Activated CD4-positive, alpha-beta memory T cell treated with anti-CD3 and anti-CD28 coated beads for 36 hours (primary cell): ENCODE measurements at regions of chr10 and their contacts with region 1.

Region 1: DNA sequence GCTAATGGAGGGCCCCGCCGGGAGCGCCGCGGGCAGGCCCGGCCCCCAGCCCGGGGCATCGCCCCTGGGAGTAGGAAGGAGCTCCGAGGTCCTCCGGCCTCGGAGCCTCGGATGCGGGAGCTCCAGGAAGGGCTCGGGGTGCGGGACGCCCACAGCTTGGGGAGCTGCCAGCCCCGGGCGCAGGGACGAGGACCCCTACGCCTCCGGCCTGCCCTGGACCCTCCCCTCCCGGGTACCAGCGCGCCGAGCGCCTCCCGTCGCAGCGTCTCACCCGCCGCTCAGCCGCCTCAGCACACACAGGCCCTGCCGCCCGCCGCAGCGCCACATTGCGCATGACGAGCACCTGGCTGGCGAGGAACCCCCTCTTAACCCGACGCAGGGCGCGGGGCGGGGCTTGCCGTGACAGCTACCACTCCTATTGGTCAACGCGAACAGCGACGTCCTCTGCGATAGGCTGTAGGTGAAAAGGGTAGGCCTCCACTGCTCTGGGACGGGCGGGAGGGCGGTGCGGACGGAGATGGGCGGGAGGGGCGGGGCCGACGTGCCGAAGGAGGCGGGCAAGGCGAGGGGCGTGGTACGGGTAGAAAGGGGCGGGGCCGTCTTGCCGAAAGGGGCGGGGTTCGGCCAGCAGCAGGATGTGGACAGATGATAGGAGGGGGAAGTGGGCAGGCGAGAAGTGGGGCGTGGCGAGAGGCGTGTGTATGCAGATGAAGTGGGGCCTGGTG is at the start of gene PITRM1:
- DNase-seq: peak; percentile 99
- H3K4me3 Mint-ChIP-seq: peak within 1 kb of the TSS; percentile 86
- H3K27ac Mint-ChIP-seq: peak within 1 kb of the TSS; percentile 86
- H3K4me1 Mint-ChIP-seq: peaks cover 27% of the 10 kb centered on the region
- H3K27me3 Mint-ChIP-seq: no peaks in the 10 kb centered on the region
- total RNA-seq, gene PITRM1: 103 to 109 TPM

Region 2: DNA sequence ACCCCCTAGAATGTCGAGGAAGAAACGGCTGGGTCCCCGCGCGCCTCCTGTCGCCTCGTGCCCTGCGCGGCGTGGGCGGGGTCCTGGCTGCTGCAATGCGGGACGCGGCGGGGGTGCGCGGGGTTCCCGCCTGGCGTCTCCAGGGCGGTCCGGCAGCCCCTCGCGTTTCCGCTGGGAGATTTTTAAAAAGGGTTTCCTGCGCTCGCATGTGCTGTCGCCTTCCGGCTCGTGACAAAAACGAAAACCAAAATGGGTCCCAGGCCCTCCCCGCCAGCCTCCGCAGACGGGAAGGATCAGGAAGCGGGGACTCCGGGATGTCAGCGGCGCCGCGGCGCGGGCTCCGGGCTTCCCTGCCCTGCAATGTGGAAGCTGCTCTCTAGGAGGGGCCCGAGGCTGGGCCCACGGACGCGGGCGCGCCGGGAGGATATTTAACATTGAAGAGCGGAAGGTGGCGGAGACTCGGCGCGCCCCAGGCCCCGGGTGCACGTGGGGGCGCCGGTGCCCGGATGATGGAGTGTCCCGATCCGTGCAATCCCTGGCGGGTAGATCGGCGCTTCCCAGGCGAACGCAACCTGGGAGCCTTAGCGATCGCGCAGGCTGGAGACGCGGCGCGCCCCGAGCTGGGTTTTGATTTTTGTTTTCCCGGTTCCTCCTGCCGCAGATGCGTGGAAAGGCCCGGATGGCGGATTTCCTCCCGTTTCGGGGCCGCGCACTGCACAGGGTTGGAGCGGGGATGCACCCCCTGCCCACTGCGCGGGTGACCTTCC is 104.2 kb before region 1 on chr10:
- CTCF ChIA-PET with region 1: no interaction called
- POLR2A ChIA-PET with region 1: interaction called, 3 read pairs
- intact Hi-C with region 1: loop called (anchors 2 kb)
- DNase-seq: peak; percentile 79
- H3K4me3 Mint-ChIP-seq: peak overlapping the region; percentile 88
- H3K27ac Mint-ChIP-seq: peak overlapping the region; percentile 88
- H3K4me1 Mint-ChIP-seq: peaks cover 41% of the 10 kb centered on the region
- H3K27me3 Mint-ChIP-seq: peaks cover 6% of the 10 kb centered on the region

Region 3: GRCh38 chr10:3376631-3377030 is 204.0 kb after region 1 on chr10:
- CTCF ChIA-PET with region 1: no interaction called
- POLR2A ChIA-PET with region 1: no interaction called
- intact Hi-C with region 1: no loop called
- DNase-seq: no peak
- H3K4me3 Mint-ChIP-seq: no peak overlapping the region
- H3K27ac Mint-ChIP-seq: no peak overlapping the region
- H3K4me1 Mint-ChIP-seq: no peaks in the 10 kb centered on the region
- H3K27me3 Mint-ChIP-seq: no peaks in the 10 kb centered on the region